ENCODE measurements at regions of chr17 and their contacts with region 1.

Region 1: DNA sequence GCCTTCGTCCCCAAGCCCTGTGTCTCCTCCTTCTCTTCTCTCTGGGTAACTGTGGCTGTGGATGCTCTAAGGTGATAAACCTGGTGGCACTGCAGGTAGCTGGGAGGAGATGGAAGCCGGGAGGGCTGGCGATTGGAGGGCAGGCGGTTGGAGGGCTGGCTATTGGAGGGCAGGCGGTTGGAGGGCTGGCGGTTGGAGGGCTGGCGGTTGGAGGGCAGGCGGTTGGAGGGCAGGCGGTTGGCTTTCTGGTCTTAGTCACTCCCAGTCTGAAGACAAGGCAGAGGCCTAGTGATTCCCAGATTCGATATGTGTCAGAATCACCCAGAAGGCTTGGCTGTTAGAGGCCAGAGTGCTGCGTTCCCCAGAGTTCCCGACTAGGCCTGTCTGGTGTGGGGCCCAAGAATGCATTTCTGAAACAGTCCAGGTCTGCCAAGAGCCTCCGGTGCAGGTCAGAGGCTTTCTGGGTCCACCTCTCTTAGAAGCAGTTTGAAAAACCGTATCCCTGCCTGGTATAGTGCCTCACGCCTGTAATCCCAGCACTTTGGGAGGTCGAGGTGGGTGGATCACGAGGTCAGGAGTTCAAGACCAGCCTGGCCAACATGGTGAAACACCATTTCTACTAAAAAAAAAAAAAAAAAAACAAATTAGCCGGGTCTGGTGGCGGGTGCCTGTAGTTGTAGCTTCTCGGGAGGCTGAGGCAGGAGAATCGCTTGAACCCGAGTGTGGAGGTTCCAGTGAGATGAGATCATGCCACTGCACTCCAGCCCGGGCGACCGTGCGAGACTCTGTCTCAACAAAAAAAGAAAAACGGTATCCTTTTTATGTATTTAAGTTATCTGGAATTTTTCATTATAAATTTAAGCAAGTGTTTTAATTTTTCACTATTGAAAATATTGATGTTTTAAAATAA is 59.7 kb downstream of the WDR45B start:
- DNase-seq: no peak
- ATAC-seq: no peak
- H3K4me3 ChIP-seq: no peak overlapping the region
- H3K27ac ChIP-seq: peak overlapping the region in 1 of 10 donors; percentile 31
- H3K4me1 ChIP-seq: peaks cover 11 to 53% (median 27%) of the 10 kb centered on the region in 9 donors
- H3K27me3 ChIP-seq: no peaks in the 10 kb centered on the region
- CTCF ChIP-seq: no peak

Region 2: DNA sequence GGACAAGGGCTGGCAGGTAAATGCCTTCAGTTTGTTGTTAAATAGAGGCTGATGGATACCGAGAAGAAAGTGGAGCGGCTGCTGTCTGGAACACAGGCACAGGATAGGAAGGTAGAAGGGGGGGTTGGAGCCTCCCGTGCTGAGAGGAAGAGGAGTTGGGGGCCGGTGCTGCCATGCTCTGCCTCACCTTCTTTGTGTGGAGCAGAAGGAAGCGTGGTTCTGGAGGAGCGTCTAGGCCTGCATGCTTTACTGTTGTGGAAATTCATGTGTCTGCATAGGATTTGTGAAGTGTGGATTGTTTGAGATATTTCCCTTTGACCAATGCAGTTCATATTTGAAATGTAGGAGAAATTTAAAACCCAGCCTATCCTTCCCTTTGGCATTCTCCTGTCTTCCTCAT is 16.7 kb before region 1 on chr17:
- intact Hi-C with region 1: loop called in 1 of 10 experiments (anchors 1 kb)
- DNase-seq: no peak
- ATAC-seq: no peak
- H3K4me3 ChIP-seq: no peak overlapping the region
- H3K27ac ChIP-seq: no peak overlapping the region
- H3K4me1 ChIP-seq: peaks cover 8 to 38% (median 24%) of the 10 kb centered on the region in 9 donors
- H3K27me3 ChIP-seq: no peaks in the 10 kb centered on the region
- CTCF ChIP-seq: no peak

Region 3: DNA sequence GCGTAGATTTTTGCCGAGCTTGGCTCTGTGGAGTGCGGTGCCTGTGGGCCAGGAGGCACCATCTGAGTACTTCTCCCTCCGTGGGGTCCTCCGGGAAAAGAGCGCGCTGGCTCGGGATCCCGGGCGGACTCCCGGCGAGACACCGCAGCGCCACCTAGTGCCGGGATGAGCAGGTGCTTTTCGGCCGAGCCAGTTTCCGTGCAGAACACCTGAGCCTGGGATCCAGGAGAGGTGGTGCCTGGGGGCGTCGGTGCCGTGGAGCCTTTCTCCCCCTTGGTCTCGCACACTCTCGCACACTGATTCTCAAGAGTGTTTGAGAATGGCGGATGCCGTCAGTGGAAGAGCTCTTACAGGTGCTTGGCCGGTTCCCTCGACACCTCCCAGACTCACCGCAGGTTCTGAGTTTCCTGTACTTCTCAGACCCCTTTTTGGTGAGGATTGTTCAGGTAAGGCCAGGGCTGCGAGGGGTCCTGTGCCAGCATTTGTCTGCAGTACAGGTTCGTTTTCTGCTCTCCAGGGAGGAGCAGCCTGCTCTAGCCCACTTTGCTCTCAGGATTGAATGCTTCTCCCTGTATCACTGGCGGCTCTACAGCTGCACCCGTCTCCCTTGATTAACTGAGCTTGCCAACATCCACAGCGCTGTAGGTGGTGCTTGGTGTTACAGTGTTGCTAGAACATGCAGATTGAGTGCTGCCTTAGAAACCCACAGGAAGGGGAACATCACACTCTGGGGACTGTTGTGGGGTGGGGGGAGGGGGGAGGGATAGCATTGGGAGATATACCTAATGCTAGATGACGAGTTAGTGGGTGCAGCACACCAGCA is 186.7 kb after region 1 on chr17:
- intact Hi-C with region 1: no loop called
- DNase-seq: peak; percentile 37 to 74
- ATAC-seq: peak; percentile 23 to 69 (median 54)
- H3K4me3 ChIP-seq: peak overlapping the region in 3 of 10 donors; percentile 12 to 29 (median 24)
- H3K27ac ChIP-seq: peak overlapping the region in 1 of 10 donors; percentile 10
- H3K4me1 ChIP-seq: peaks cover 0 to 13% (median 0%) of the 10 kb centered on the region in 9 donors
- H3K27me3 ChIP-seq: no peaks in the 10 kb centered on the region
- CTCF ChIP-seq: peak; percentile 75 to 92 (median 89)